Dorsolateral prefrontal cortex (tissue), 120 donors: ENCODE measurements at regions of chr15 and their contacts with region 1.

Region 1: GRCh38 chr15:81054236-81054635 is 53.5 kb downstream of the TLNRD1 start:
- DNase-seq: no peak
- H3K4me3 ChIP-seq: no peak overlapping the region
- H3K27ac ChIP-seq: no peak overlapping the region
- H3K27me3 ChIP-seq: no peaks in the 10 kb centered on the region
- CTCF ChIP-seq: no peak

Region 2: DNA sequence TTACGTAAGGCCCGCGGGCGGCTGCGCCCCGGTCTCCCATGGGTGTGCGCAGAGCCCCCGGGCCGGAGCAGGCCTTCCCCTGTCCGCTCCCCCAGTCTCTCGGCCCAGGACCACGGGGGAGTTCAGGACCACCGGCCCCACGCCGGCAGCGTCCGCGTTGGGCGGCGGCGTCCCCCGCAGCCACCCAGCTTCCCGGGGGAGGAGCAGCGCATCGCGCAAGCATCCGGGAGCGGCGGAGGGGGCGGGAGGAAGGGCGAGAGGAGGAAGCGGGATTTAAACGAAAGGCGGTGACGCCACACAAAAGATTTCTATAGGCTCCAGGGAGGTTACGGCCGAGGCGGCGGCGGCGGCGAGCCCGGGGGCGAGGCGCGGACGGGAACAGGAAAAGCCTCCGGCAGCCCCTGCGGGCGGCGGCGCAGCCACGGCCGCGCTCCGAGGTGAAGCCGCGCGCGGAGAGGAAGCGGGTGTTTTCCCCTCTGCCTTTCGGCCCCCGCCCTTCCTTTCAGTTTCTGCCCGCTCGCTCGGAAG is 53.5 kb before region 1 on chr15 and contains the start of gene TLNRD1:
- intact Hi-C with region 1: loop called (anchors 5 kb)
- DNase-seq: peak; percentile 56 to 93 (median 84)
- H3K4me3 ChIP-seq: peak within 1 kb of the TSS; percentile 60 to 95 (median 87)
- H3K27ac ChIP-seq: peak within 1 kb of the TSS; percentile 78 to 99 (median 97)
- H3K27me3 ChIP-seq: no peaks in the 10 kb centered on the region
- CTCF ChIP-seq: peak in 9 of 56 donors; percentile 8 to 30 (median 15)
- total RNA-seq, gene TLNRD1: 10.3 to 20.4 (median 16.1) TPM

Region 3: GRCh38 chr15:81098861-81099651 is 44.8 kb after region 1 on chr15:
- intact Hi-C with region 1: loop called in 1 of 2 experiments (anchors 5 kb)
- DNase-seq: no peak
- H3K4me3 ChIP-seq: peak overlapping the region in 1 of 59 donors; percentile 21
- H3K27ac ChIP-seq: peak overlapping the region in 1 of 59 donors; percentile 7
- H3K27me3 ChIP-seq: no peaks in the 10 kb centered on the region
- CTCF ChIP-seq: no peak

Region 4: GRCh38 chr15:81195339-81195864 is 141.2 kb after region 1 on chr15:
- intact Hi-C with region 1: no loop called
- DNase-seq: no peak
- H3K4me3 ChIP-seq: no peak overlapping the region
- H3K27ac ChIP-seq: peak overlapping the region in 1 of 59 donors; percentile 89
- H3K27me3 ChIP-seq: no peaks in the 10 kb centered on the region
- CTCF ChIP-seq: no peak